ENCODE measurements at regions of chr6 and their contacts with region 1.

Region 1: GRCh38 chr6:138509371-138509770 is 10.1 kb upstream of the NHSL1 start:
- DNase-seq: peak; percentile 67
- ATAC-seq: peak; percentile 47
- H3K4me3 Mint-ChIP-seq: no peak overlapping the region
- H3K27ac Mint-ChIP-seq: no peak overlapping the region
- H3K4me1 Mint-ChIP-seq: peaks cover 3% of the 10 kb centered on the region
- H3K27me3 Mint-ChIP-seq: peaks cover 31% of the 10 kb centered on the region

Region 2: DNA sequence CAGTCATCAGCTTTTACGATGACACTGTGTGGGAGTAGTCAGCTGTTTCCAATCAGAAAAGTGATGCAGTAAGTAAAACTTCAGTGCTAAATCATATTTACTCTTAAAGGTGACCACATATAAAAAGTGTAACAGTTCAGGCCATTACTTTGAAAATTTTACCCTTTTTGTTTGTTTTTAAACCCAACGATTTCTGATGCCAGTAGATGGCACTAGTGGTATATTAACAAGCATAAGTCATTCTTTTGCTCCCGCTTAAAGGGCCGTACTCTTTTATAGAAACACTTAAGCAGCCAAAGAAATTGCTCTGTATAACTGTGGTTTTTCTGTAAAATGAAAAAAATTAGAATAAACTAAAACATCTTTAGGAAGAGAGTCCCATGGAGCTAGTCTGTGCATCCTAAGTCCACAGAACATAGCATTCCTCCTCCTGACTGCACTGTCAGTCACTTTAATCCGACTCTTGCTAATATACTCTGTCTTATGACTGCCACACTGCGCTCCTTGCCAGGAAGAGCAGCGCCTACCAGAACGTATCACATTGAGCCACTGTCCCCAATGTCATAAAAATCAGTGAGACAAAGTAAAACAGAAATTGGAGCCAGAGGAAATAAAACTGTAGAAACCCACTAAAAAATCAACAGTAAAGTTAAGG is 80.3 kb before region 1 on chr6:
- CTCF ChIA-PET with region 1: interaction called, 41 read pairs
- DNase-seq: no peak
- ATAC-seq: peak; percentile 53
- H3K4me3 Mint-ChIP-seq: no peak overlapping the region
- H3K27ac Mint-ChIP-seq: no peak overlapping the region
- H3K4me1 Mint-ChIP-seq: no peaks in the 10 kb centered on the region
- H3K27me3 Mint-ChIP-seq: peaks cover 2% of the 10 kb centered on the region

Region 3: GRCh38 chr6:138491017-138491416 is 18.4 kb before region 1 on chr6:
- CTCF ChIA-PET with region 1: no interaction called
- DNase-seq: no peak
- ATAC-seq: no peak
- H3K4me3 Mint-ChIP-seq: no peak overlapping the region
- H3K27ac Mint-ChIP-seq: no peak overlapping the region
- H3K4me1 Mint-ChIP-seq: peaks cover 2% of the 10 kb centered on the region
- H3K27me3 Mint-ChIP-seq: peaks cover 33% of the 10 kb centered on the region